A673 (cell line): ENCODE measurements at regions of chr12 and their contacts with region 1.

Region 1: GRCh38 chr12:108691175-108691997 is 39.9 kb downstream of the CORO1C start:
- DNase-seq: peak; percentile 94
- H3K4me3 ChIP-seq: no peak overlapping the region
- H3K27ac ChIP-seq: peak overlapping the region; percentile 96
- H3K4me1 ChIP-seq: peaks cover 51% of the 10 kb centered on the region
- H3K27me3 ChIP-seq: no peaks in the 10 kb centered on the region
- CTCF ChIP-seq: no peak

Region 2: DNA sequence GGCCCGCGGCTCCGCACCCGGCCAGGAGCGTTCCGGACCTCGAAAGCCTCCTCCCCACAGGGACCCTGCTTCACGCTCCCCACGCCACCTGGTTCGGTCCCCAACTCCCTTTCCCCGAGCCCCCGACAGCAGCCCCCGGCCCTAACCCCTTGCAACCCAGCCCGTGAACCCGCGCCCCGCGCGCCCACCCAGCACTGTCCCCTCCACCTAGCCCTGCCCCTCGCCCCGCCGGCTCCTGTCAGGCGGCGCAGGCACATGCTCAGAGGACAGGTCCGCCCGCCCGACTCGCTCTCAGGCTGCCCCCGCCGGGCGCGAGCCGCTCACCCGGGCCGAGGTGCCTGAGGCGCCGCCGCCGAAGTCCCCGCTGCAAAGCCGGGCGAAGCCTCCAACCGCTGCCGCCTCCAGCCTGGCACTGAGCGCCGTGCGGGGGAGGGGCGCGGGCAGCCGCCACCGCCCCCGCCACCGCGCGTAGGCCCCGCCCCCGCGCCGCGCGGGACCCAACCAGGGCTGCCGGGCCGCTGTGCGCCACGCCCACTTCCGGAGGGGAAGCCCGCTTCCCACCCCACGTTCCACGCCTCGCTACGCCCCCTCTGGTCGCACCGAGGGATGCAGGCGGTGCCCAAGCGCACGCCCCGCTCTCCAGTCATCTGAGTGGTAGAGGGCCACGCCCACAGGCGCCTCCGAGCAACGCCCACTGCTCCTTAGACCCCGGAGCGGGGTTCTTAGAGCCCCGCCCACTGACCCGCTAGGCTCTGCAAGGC is 39.9 kb after region 1 on chr12 and contains the start of gene CORO1C:
- CTCF ChIA-PET with region 1: no interaction called
- POLR2A ChIA-PET with region 1: no interaction called
- intact Hi-C with region 1: loop called (anchors 2 kb)
- DNase-seq: peak; percentile 98
- H3K4me3 ChIP-seq: peak within 1 kb of the TSS; percentile 90
- H3K27ac ChIP-seq: peak within 1 kb of the TSS; percentile 92
- H3K4me1 ChIP-seq: peaks cover 30% of the 10 kb centered on the region
- H3K27me3 ChIP-seq: no peaks in the 10 kb centered on the region
- CTCF ChIP-seq: peak; percentile 91
- total RNA-seq, gene CORO1C: 206 and 208 TPM in 2 replicates

Region 3: GRCh38 chr12:108939594-108939993 is 248.2 kb after region 1 on chr12:
- CTCF ChIA-PET with region 1: no interaction called
- POLR2A ChIA-PET with region 1: no interaction called
- intact Hi-C with region 1: no loop called
- DNase-seq: peak; percentile 10
- H3K4me3 ChIP-seq: no peak overlapping the region
- H3K27ac ChIP-seq: no peak overlapping the region
- H3K4me1 ChIP-seq: no peaks in the 10 kb centered on the region
- H3K27me3 ChIP-seq: peaks cover 32% of the 10 kb centered on the region
- CTCF ChIP-seq: no peak